Gastrocnemius medialis (tissue), 4 donors: ENCODE measurements at regions of chr14 and their contacts with region 1.

Region 1: GRCh38 chr14:70714055-70714621 is 72.4 kb downstream of the TTC9 start:
- DNase-seq: no peak
- ATAC-seq: peak in 1 of 2 donors; percentile 21
- H3K4me3 ChIP-seq: no peak overlapping the region
- H3K27ac ChIP-seq: no peak overlapping the region
- H3K4me1 ChIP-seq: no peaks in the 10 kb centered on the region
- H3K27me3 ChIP-seq: no peaks in the 10 kb centered on the region
- CTCF ChIP-seq: peak; percentile 46 to 64 (median 58)
- POLR2A ChIP-seq: no peak

Region 2: GRCh38 chr14:70622111-70622712 is 91.9 kb before region 1 on chr14:
- in situ Hi-C with region 1: loop called in 2 of 4 experiments (anchors 5 to 10 kb)
- intact Hi-C with region 1: loop called (anchors 1 kb)
- DNase-seq: peak in 1 of 2 donors; percentile 17
- ATAC-seq: no peak
- H3K4me3 ChIP-seq: no peak overlapping the region
- H3K27ac ChIP-seq: no peak overlapping the region
- H3K4me1 ChIP-seq: no peaks in the 10 kb centered on the region
- H3K27me3 ChIP-seq: no peaks in the 10 kb centered on the region
- CTCF ChIP-seq: peak; percentile 28 to 67 (median 49)
- POLR2A ChIP-seq: no peak

Region 3: GRCh38 chr14:70821584-70822529 is 107.7 kb after region 1 on chr14:
- in situ Hi-C with region 1: no loop called
- intact Hi-C with region 1: loop called (anchors 2 kb)
- DNase-seq: peak in 1 of 2 donors; percentile 22
- ATAC-seq: peak; percentile 18 to 32
- H3K4me3 ChIP-seq: peak overlapping the region; percentile 57 to 99 (median 71)
- H3K27ac ChIP-seq: peak overlapping the region in 1 of 4 donors; percentile 16
- H3K4me1 ChIP-seq: peaks cover 10 to 14% of the 10 kb centered on the region in 2 donors
- H3K27me3 ChIP-seq: peaks cover 2 to 9% (median 6%) of the 10 kb centered on the region in 3 donors
- CTCF ChIP-seq: no peak
- POLR2A ChIP-seq: no peak